Activated B cell treated with CpG ODN at 0.5 μM for 24 hours (primary cell): ENCODE measurements at regions of chr14 and their contacts with region 1.

Region 1: DNA sequence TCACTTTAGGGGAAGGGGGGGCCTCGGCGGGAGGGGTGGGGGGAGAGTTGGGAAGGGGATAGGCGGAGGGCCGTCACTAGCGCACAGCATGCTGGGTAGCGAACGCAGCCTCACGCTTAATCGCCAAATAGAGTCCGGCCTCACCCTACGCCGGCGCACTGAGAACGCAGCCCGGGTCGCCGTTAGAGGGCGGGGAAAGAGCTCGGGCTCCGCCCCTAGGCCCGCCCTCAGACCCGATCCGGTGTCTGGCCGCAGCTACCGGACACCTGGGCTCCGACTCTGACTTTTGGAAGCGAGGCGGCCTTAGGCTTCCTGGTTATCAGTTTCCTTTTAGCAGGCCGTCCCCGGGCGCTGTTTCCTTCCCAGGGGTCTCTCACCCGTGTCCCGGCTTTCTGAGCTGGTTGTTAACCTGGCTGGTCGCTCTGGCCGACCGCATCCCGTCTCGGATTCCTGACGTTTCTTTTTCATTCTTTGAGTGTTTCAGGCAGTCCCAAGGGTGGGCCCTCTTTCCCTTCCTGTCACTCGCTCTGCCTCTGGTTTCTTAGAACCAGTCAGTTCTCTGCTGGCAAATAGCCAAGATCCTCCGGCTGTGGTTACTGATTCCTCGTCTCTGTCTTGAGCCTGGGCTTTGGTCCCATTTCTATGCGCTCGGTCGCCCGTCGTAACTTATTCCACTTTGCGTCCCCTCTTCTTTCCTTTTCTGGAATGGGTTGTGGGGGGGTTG is 378 bp upstream of the STRN3 start:
- DNase-seq: peak; percentile 95
- ATAC-seq: peak; percentile 94
- H3K4me3 Mint-ChIP-seq: peak overlapping the region; percentile 99
- H3K27ac Mint-ChIP-seq: peak overlapping the region; percentile 95
- H3K4me1 Mint-ChIP-seq: peaks cover 40% of the 10 kb centered on the region
- H3K27me3 Mint-ChIP-seq: no peaks in the 10 kb centered on the region
- CTCF ChIP-seq: no peak

Region 2: GRCh38 chr14:30558675-30559555 is 467.6 kb before region 1 on chr14 and contains the start of gene G2E3:
- CTCF ChIA-PET with region 1: no interaction called
- POLR2A ChIA-PET with region 1: no interaction called
- intact Hi-C with region 1: loop called (anchors 2 kb)
- DNase-seq: peak; percentile 88
- ATAC-seq: peak; percentile 99
- H3K4me3 Mint-ChIP-seq: peak within 1 kb of the TSS; percentile 100
- H3K27ac Mint-ChIP-seq: peak within 1 kb of the TSS; percentile 98
- H3K4me1 Mint-ChIP-seq: peaks cover 29% of the 10 kb centered on the region
- H3K27me3 Mint-ChIP-seq: no peaks in the 10 kb centered on the region
- CTCF ChIP-seq: no peak
- total RNA-seq, gene G2E3: 23.5 and 32.6 TPM in 2 replicates

Region 3: DNA sequence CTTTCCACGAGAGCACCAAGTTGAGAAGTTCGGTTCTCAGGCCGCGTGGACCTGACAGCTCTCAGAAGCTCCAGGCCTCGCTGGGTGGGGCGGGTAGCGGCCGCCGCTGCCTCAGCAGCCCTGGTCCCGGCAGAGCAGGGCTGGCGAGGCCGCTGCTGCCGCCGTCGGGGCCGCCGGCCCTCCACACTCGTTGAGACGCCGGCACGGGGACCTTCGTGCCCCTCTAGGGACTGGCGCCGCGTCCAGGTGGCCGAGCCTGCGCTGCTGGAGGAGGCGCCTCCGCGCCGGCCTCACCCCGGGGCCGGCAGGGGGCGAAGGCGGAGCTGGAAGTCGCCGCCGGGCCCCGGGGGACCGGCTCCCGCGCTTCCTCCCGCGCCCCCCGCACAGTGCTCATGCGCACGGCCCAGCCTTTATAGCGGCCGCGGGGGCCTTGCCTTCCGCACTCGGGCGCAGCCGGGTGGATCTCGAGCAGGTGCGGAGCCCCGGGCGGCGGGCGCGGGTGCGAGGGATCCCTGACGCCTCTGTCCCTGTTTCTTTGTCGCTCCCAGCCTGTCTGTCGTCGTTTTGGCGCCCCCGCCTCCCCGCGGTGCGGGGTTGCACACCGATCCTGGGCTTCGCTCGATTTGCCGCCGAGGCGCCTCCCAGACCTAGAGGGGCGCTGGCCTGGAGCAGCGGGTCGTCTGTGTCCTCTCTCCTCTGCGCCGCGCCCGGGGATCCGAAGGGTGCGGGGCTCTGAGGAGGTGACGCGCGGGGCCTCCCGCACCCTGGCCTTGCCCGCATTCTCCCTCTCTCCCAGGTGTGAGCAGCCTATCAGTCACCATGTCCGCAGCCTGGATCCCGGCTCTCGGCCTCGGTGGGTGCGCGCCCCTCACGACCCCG is 152.2 kb before region 1 on chr14 and contains the start of gene COCH:
- CTCF ChIA-PET with region 1: no interaction called
- POLR2A ChIA-PET with region 1: no interaction called
- intact Hi-C with region 1: loop called (anchors 5 kb)
- DNase-seq: peak; percentile 66
- ATAC-seq: peak; percentile 76
- H3K4me3 Mint-ChIP-seq: peak within 1 kb of the TSS; percentile 88
- H3K27ac Mint-ChIP-seq: peak within 1 kb of the TSS; percentile 35
- H3K4me1 Mint-ChIP-seq: peaks cover 24% of the 10 kb centered on the region
- H3K27me3 Mint-ChIP-seq: peaks cover 11% of the 10 kb centered on the region
- CTCF ChIP-seq: no peak
- total RNA-seq, gene COCH: 10.2 and 10.4 TPM in 2 replicates

Region 4: DNA sequence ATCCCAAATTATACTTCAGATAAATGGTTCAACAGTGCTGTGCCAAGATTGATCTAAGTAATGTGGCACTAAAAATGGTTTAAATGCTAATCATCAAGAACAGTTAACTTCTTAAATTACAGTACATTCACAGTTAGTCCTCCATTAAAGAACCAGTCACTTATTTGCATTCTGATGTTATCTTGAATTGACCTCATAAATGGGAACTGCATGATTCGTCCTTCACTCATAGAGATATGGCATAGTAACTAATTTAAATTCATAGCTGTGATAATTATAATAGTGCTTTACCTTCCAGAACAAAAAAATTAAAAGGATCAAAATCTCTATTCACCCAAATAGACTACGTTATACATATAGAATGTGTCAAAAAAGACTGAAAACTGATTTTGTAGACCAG is 91.1 kb before region 1 on chr14:
- CTCF ChIA-PET with region 1: no interaction called
- POLR2A ChIA-PET with region 1: no interaction called
- intact Hi-C with region 1: no loop called
- DNase-seq: no peak
- ATAC-seq: no peak
- H3K4me3 Mint-ChIP-seq: no peak overlapping the region
- H3K27ac Mint-ChIP-seq: no peak overlapping the region
- H3K4me1 Mint-ChIP-seq: no peaks in the 10 kb centered on the region
- H3K27me3 Mint-ChIP-seq: no peaks in the 10 kb centered on the region
- CTCF ChIP-seq: no peak

Region 5: DNA sequence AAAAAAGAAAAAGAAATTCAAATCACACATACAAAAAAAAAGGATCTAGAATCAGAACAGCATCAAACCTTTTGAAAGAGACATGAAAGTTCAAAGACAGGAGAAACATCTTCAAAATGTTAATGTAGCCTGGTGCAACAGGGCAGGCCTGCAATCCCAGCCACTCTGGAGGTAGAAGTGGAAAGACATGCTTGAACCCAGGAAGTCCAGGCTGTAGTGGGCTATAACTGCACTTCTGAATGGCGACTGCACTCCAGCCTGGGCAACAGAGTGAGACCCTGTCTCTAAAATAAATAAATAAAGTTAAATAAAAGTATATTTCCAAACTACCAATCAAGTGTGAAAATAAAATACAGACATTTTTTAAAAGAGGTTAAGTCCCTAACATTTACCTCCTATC is 19.9 kb before region 1 on chr14:
- CTCF ChIA-PET with region 1: no interaction called
- POLR2A ChIA-PET with region 1: no interaction called
- intact Hi-C with region 1: loop called (anchors 2 kb)
- DNase-seq: no peak
- ATAC-seq: no peak
- H3K4me3 Mint-ChIP-seq: no peak overlapping the region
- H3K27ac Mint-ChIP-seq: no peak overlapping the region
- H3K4me1 Mint-ChIP-seq: peaks cover 3% of the 10 kb centered on the region
- H3K27me3 Mint-ChIP-seq: no peaks in the 10 kb centered on the region
- CTCF ChIP-seq: no peak

Region 6: DNA sequence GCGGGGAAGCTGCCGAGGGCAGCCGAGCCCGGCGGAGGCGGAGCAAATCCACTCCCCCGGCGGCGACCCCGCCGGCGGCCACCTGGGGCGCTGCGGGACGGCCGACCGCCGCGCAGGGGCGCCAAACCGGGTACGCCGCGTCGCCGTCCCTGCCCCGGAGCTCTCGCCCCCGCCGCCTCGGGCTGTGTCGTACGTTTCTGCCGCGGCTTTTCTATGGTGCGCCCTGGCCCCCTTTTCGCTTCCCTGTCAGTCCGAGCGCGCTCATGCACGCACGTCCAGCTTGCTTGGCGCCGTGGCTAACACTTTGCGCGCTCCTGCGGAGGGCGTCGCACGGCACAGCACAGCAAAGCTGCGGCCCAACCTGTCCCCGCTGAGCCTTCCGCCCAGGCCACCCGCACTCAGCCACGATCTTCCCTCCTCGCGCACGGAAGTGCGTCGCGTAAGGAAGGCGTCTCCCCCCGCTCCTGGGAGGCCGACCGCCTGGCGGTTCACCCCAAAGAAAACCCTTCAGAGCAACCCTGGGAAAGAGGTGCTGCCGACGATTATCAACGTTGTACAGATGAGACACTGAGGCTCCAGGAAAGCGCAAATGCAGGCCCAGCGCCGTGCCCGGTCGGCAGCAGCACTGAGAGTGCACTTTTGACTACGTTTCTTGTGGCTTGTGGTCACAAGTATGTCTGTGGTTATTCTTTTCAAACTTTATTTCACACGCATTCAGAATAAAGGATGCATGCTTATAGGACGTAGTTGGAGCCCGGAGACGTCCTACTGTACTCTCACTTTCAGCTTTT is 181.4 kb after region 1 on chr14 and contains the start of gene HECTD1:
- CTCF ChIA-PET with region 1: interaction called, 5 read pairs
- POLR2A ChIA-PET with region 1: interaction called, 38 read pairs
- intact Hi-C with region 1: loop called (anchors 1 kb)
- DNase-seq: no peak
- ATAC-seq: peak; percentile 82
- H3K4me3 Mint-ChIP-seq: peak within 1 kb of the TSS; percentile 96
- H3K27ac Mint-ChIP-seq: peak within 1 kb of the TSS; percentile 99
- H3K4me1 Mint-ChIP-seq: peaks cover 39% of the 10 kb centered on the region
- H3K27me3 Mint-ChIP-seq: no peaks in the 10 kb centered on the region
- CTCF ChIP-seq: no peak
- total RNA-seq, gene HECTD1: 139 and 163 TPM in 2 replicates

Region 7: GRCh38 chr14:31456841-31457664 is 430.5 kb after region 1 on chr14 and contains the start of gene DTD2:
- CTCF ChIA-PET with region 1: no interaction called
- POLR2A ChIA-PET with region 1: interaction called, 5 read pairs
- intact Hi-C with region 1: loop called (anchors 1 kb)
- DNase-seq: peak; percentile 82
- ATAC-seq: peak; percentile 98
- H3K4me3 Mint-ChIP-seq: peak within 1 kb of the TSS; percentile 99
- H3K27ac Mint-ChIP-seq: peak within 1 kb of the TSS; percentile 96
- H3K4me1 Mint-ChIP-seq: peaks cover 31% of the 10 kb centered on the region
- H3K27me3 Mint-ChIP-seq: no peaks in the 10 kb centered on the region
- CTCF ChIP-seq: no peak
- total RNA-seq, gene DTD2: 19.8 and 21.3 TPM in 2 replicates

Region 8: DNA sequence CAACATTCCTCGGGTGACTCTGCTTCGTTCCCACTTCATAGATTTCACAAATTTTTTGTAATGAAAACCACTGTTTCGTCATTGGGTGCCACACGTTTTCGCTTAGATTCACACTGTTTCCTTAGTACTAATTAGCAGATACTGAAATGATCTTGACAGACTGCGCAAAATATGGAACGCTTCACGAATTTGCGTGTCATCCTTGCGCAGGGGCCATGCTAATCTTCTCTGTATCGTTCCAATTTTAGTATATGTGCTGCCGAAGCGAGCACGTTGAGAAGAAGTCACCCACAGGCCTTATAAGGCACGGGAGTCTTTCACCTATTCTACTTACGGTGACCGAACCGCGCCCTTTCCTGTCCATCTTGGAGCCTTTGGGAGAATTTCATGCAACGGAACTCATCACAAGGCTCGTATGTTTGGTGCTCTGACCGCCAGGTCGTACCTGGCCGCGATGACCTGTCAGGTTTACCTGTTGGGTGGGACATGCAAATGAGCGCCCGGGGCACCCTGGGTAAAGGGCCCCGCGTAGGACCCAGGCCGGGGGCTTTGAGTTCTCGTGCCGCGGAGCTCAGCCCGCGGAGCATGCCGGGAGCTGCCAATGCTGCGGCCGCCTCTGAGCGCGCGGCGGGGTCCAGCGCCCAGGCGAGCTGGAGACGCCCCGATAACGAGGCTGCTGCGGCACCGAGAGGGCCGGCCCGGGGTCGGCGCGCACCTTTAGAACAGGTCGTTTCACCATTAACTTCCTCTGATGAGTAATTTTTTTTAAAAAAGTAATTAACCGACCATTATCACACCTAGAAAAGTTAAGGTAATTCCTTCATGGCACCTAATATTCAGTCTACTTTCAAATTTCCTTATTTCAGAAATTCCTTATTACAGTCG is 1176.7 kb after region 1 on chr14 and contains the start of gene RNU6-8:
- CTCF ChIA-PET with region 1: no interaction called
- POLR2A ChIA-PET with region 1: interaction called, 5 read pairs
- intact Hi-C with region 1: loop called (anchors 5 kb)
- DNase-seq: peak; percentile 84
- ATAC-seq: peak; percentile 78
- H3K4me3 Mint-ChIP-seq: peak within 1 kb of the TSS; percentile 87
- H3K27ac Mint-ChIP-seq: peak within 1 kb of the TSS; percentile 100
- H3K4me1 Mint-ChIP-seq: peaks cover 51% of the 10 kb centered on the region
- H3K27me3 Mint-ChIP-seq: no peaks in the 10 kb centered on the region
- CTCF ChIP-seq: no peak
- total RNA-seq, gene RNU6-8: not detected in 2 replicates